ENCODE measurements at regions of chr4 and their contacts with region 1.

Region 1: DNA sequence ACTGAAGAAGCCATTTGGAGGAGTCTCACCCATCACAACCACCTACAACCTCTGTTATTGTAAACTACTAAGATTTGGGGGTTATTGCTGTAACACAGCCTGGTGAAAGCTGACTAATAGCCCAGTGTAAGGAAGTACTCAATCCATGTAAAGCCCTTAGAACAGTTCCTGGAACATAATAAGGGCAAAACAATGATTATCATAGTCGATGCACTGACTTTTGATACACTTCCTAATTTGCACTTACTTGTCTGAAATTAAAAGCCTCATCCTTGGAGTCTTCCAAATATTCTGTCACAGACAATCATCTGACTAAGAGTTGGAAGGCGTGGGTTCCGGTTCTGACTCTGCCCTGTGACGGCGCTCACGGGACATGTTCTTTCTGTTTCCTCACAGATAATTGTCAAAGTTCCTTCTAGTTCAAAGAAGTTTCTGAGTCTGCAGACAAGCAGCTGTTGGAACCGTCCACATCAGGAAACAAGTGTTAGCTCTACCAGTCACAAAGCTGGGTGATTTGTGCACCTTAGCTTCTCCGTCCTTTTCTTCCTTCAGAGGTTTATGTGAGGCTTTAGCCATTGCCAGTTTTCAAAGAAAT is 33.4 kb upstream of the RASGEF1B start:
- H3K4me3 Mint-ChIP-seq: peak overlapping the region; percentile 37
- H3K27ac Mint-ChIP-seq: peak overlapping the region; percentile 97
- H3K4me1 Mint-ChIP-seq: peaks cover 73% of the 10 kb centered on the region
- H3K27me3 Mint-ChIP-seq: no peaks in the 10 kb centered on the region

Region 2: DNA sequence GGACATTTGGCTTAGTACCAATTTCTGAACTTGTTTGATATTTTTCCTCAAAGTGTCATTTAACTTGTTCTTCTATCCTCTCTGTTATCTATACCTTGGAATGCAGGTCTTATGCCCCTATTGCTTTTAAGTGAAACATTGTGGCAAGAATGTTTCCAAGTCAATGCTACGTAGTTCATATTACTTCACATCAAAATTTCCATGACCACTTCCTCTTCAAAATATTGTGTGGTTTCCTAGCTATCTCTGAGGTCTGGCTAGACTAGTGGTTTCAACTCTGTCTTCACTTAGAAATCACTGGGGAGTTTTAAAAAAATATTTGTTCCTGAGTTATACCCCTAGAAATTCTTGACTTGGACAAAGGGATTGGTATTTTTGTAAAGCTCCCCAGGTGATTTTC is 13.2 kb before region 1 on chr4:
- intact Hi-C with region 1: loop called (anchors 1 kb)
- H3K4me3 Mint-ChIP-seq: no peak overlapping the region
- H3K27ac Mint-ChIP-seq: peak overlapping the region; percentile 82
- H3K4me1 Mint-ChIP-seq: peaks cover 25% of the 10 kb centered on the region
- H3K27me3 Mint-ChIP-seq: no peaks in the 10 kb centered on the region

Region 3: GRCh38 chr4:81562093-81562492 is 57.0 kb after region 1 on chr4:
- intact Hi-C with region 1: loop called (anchors 5 kb)
- H3K4me3 Mint-ChIP-seq: no peak overlapping the region
- H3K27ac Mint-ChIP-seq: no peak overlapping the region
- H3K4me1 Mint-ChIP-seq: peaks cover 14% of the 10 kb centered on the region
- H3K27me3 Mint-ChIP-seq: peaks cover 4% of the 10 kb centered on the region

Region 4: GRCh38 chr4:81631958-81632441 is 126.9 kb after region 1 on chr4:
- intact Hi-C with region 1: loop called (anchors 10 kb)
- H3K4me3 Mint-ChIP-seq: no peak overlapping the region
- H3K27ac Mint-ChIP-seq: no peak overlapping the region
- H3K4me1 Mint-ChIP-seq: peaks cover 35% of the 10 kb centered on the region
- H3K27me3 Mint-ChIP-seq: no peaks in the 10 kb centered on the region

Measured in dendritic cell treated with granulocyte-macrophage colony-stimulating factor and Interleukin-4, amounts not matched to agents 40 ng/mL and 50 ng/mL, for 4 days (primary cell).